Activated T-helper 1 cell treated with anti-CD3 and anti-CD28 coated beads, Interleukin-12 subunit alpha, Interleukin-12 subunit beta, Interleukin-2, Interleukin-4 antibody, amounts not matched to agents 30 ng/mL and 10 ng/mL and 1 ng/mL, durations not matched to agents 14 hours and 24 hours and 36 hours (primary cell): ENCODE measurements at regions of chr2 and their contacts with region 1.

Region 1: DNA sequence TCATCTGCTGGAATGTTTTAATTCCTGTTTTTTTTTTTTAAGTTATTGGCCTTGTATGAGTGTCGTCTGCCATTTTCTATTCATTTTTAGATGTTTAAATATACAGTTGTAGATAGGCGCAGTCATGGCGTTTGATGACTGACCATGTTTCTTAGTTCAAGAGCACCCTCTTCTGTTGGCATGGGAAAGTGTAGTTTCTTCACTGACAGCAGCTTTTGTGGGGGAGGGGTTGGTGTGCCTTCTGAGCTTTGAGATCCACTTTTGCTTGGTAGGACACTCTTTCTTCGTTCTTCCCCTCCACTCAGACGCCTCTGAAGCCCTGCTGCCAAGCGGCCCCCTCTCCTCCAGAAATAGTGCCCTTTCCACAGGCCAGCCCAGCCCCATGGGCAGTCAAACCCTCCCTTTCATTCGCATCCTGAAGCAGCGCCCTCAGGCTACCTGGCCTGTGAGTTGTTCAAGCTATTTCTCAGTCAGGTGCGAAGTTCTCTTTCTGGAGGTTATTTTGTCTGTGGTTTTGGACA is 492.0 kb downstream of the TNS1 start:
- DNase-seq: no peak
- H3K4me3 Mint-ChIP-seq: no peak overlapping the region
- H3K27ac Mint-ChIP-seq: no peak overlapping the region
- H3K4me1 Mint-ChIP-seq: peaks cover 7% of the 10 kb centered on the region
- H3K27me3 Mint-ChIP-seq: peaks cover 6% of the 10 kb centered on the region

Region 2: DNA sequence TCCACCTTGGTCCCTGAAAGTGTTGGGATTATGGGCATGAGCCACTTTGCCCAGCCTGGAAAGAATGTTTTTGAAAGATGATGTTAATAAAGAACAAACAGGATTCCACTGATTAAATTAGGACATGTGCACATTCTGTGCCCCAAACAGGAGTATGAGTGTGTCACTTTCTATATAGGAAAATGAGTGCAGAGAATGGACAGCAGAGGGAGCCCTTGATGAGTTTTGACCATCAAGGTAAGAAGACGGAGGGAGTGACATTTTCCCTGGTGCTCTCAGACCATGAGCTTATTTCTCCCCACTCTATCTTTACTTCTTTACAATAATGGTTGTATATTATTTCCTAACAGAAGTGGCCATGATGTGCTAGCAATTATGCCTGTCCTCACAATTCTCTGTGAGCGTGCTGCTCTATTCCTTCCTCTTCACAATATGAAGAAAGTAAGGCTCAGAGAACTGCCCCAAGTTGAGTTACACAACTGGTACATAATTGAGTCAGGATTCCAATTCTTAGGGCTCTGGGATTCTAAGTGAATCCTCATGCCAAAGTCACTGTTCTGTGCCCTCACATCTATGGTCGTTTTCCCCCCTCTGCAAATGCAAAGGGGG is 991.6 kb before region 1 on chr2:
- intact Hi-C with region 1: loop called (anchors 1 kb)
- DNase-seq: peak; percentile 39
- H3K4me3 Mint-ChIP-seq: no peak overlapping the region
- H3K27ac Mint-ChIP-seq: no peak overlapping the region
- H3K4me1 Mint-ChIP-seq: no peaks in the 10 kb centered on the region
- H3K27me3 Mint-ChIP-seq: no peaks in the 10 kb centered on the region

Region 3: GRCh38 chr2:216683846-216684507 is 826.9 kb before region 1 on chr2:
- intact Hi-C with region 1: loop called (anchors 1 kb)
- DNase-seq: no peak
- H3K4me3 Mint-ChIP-seq: no peak overlapping the region
- H3K27ac Mint-ChIP-seq: no peak overlapping the region
- H3K4me1 Mint-ChIP-seq: peaks cover 10% of the 10 kb centered on the region
- H3K27me3 Mint-ChIP-seq: peaks cover 15% of the 10 kb centered on the region

Region 4: DNA sequence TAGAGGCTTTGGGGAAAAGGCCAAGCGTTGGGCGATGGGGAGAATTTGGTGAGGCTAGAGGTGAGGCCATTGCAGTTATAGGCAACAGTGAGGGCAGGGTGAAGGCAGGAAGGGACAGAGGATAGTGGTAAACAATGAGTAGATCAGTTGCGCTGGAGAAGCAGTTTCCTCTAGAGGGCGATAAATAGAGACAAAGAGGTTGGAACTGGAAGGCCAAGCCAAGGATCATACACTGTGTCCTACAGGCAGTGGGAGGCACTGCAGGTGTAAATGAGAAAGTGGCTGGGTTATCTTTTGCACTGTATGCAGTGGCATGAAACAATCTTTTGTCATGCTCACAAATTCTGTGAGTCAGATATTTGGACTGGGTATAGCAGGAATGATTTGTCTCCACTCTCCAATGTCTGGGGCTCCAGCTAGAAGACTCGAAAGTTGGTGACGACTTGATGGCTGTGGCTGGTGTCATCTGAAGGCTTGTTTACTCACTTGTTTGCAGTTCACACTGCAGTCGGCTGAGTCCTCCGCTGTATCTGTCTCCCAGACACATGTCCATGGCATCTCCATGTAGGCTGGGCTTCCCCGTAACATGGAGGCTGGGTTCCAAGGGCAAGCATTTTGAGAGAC is 733.1 kb before region 1 on chr2:
- intact Hi-C with region 1: loop called (anchors 1 kb)
- DNase-seq: peak; percentile 36
- H3K4me3 Mint-ChIP-seq: no peak overlapping the region
- H3K27ac Mint-ChIP-seq: no peak overlapping the region
- H3K4me1 Mint-ChIP-seq: peaks cover 4% of the 10 kb centered on the region
- H3K27me3 Mint-ChIP-seq: peaks cover 13% of the 10 kb centered on the region

Region 5: DNA sequence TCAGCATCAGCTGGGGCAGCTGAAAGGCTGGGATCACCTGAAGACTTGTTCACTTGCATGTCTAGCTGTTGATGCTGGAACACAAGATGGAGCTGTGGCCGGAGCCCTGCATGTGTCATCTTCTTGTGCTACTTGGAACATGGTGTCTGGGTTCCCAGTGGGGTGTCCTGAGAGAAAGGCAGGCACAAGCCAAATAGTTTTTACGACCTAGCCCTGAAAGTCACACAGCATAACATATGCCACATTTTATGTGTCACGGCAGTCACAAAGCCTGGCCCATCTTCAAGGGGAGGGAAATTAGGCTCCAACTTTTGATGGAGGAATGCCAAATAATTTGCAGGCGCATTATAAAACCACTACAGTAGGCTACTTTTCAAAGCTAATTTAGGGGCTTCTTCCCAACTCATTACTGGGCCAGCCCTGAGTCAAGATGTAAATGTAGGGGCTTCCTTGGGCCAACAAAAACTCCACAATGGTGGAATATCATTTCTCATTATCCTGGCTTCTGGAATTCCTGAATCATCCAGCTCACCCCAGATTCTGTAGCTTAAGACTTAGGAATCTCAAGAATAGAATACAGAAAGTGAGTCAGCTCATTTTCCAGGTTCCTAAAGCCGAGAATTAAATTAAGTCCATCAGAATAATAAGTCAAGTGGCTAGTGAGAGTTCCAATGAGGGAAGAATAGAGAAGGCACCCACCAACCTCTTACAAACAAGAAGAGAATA is 51.0 kb before region 1 on chr2:
- intact Hi-C with region 1: loop called (anchors 1 kb)
- DNase-seq: no peak
- H3K4me3 Mint-ChIP-seq: no peak overlapping the region
- H3K27ac Mint-ChIP-seq: no peak overlapping the region
- H3K4me1 Mint-ChIP-seq: no peaks in the 10 kb centered on the region
- H3K27me3 Mint-ChIP-seq: no peaks in the 10 kb centered on the region

Region 6: DNA sequence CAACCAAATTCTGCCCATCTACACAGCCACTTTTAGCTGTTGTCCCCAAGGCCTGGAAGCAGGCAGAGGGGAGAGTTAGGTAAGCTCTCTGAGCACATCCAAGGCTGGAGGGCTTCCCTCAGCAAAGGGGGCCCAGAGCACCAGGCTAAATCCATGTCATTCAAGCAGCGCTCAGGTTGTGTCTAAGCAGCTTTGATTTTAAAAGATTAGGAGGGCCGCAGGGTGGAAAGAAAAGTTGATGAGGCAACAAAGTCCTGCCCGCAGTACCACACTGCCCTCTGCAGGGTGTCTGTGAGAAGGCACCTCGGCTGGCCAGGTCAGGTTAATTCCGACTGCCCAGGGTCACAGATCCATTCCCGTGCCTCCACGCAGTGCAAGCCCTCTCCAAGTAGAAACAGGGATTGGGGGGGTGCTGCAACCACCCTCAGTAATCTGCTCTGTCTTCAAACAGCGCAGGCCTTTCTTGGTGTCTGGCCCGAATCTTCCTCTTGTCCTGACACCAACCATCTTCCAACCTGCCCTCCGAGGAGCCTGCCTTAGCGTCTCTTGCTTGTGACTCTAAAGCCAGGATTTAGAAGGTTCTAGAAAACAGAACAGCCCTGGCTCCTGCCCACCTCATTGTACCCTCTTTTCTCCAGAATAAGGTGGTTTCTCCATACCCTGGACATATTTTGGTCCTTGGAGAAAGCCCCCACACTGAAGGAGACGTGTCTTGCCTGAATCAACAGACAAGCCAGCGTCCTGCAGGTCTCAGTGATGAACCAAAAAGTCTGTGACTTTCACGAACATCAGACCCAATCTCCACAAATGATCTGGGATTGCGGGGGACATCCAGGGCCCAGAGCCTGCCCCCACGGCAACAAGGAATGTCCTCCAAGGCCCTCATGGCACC is 202.8 kb after region 1 on chr2:
- intact Hi-C with region 1: loop called (anchors 1 kb)
- DNase-seq: peak; percentile 48
- H3K4me3 Mint-ChIP-seq: no peak overlapping the region
- H3K27ac Mint-ChIP-seq: no peak overlapping the region
- H3K4me1 Mint-ChIP-seq: no peaks in the 10 kb centered on the region
- H3K27me3 Mint-ChIP-seq: no peaks in the 10 kb centered on the region